Panc1 (cell line): ENCODE measurements at regions of chr10 and their contacts with region 1.

Region 1: DNA sequence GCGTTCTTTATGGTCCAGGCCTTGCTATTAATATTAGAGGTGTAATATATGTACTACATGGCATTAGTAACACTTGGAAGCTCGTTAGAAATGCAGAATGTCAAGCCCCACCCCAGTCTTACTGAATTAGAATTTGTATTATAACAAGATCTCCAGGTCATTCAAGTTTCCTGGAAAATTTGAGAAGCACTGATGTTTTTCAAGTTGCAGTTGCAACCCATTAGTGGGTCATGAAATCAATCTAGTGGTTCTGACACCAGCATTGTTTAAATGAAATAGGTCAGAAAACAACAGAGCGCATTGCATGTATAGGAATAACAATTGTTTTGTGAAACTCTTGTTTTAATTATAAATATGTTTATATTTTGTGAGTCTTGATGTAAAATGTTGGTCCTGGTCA is 28.8 kb upstream of the MICU1 start:
- DNase-seq: no peak
- ATAC-seq: no peak
- H3K4me3 ChIP-seq: no peak overlapping the region
- H3K27ac ChIP-seq: no peak overlapping the region
- H3K4me1 ChIP-seq: no peaks in the 10 kb centered on the region
- H3K27me3 ChIP-seq: no peaks in the 10 kb centered on the region
- CTCF ChIP-seq: no peak

Region 2: GRCh38 chr10:72593963-72594362 is 60.8 kb before region 1 on chr10:
- CTCF ChIA-PET with region 1: interaction called, 10 read pairs
- POLR2A ChIA-PET with region 1: no interaction called
- in situ Hi-C with region 1: no loop called
- intact Hi-C with region 1: no loop called
- DNase-seq: no peak
- ATAC-seq: no peak
- H3K4me3 ChIP-seq: no peak overlapping the region
- H3K27ac ChIP-seq: no peak overlapping the region
- H3K4me1 ChIP-seq: no peaks in the 10 kb centered on the region
- H3K27me3 ChIP-seq: no peaks in the 10 kb centered on the region
- CTCF ChIP-seq: no peak